B cell (primary cell): ENCODE measurements at regions of chr2 and their contacts with region 1.

Region 1: GRCh38 chr2:65390134-65390533 is 42.3 kb downstream of the SPRED2 start:
- DNase-seq: peak; percentile 81
- ATAC-seq: peak; percentile 80
- H3K4me3 ChIP-seq: peak overlapping the region in 3 of 5 experiments; percentile 29 to 42 (median 32)
- H3K4me3 Mint-ChIP-seq: peak overlapping the region; percentile 84
- H3K27ac ChIP-seq: peak overlapping the region in 1 of 2 donors; percentile 29
- H3K27ac Mint-ChIP-seq: peak overlapping the region; percentile 39
- H3K4me1 ChIP-seq: peaks cover 50 to 51% of the 10 kb centered on the region in 2 donors
- H3K4me1 Mint-ChIP-seq: peaks cover 58% of the 10 kb centered on the region
- H3K27me3 ChIP-seq: no peaks in the 10 kb centered on the region
- H3K27me3 Mint-ChIP-seq: peaks cover 11% of the 10 kb centered on the region
- CTCF ChIP-seq: no peak

Region 2: GRCh38 chr2:65278531-65278981 is 111.6 kb before region 1 on chr2:
- CTCF ChIA-PET with region 1: no interaction called
- POLR2A ChIA-PET with region 1: no interaction called
- intact Hi-C with region 1: loop called (anchors 10 kb)
- DNase-seq: no peak
- ATAC-seq: no peak
- H3K4me3 ChIP-seq: no peak overlapping the region
- H3K4me3 Mint-ChIP-seq: no peak overlapping the region
- H3K27ac ChIP-seq: no peak overlapping the region
- H3K27ac Mint-ChIP-seq: no peak overlapping the region
- H3K4me1 ChIP-seq: peaks cover 6 to 10% of the 10 kb centered on the region in 2 donors
- H3K4me1 Mint-ChIP-seq: peaks cover 9% of the 10 kb centered on the region
- H3K27me3 ChIP-seq: no peaks in the 10 kb centered on the region
- H3K27me3 Mint-ChIP-seq: peaks cover 5% of the 10 kb centered on the region
- CTCF ChIP-seq: no peak

Region 3: DNA sequence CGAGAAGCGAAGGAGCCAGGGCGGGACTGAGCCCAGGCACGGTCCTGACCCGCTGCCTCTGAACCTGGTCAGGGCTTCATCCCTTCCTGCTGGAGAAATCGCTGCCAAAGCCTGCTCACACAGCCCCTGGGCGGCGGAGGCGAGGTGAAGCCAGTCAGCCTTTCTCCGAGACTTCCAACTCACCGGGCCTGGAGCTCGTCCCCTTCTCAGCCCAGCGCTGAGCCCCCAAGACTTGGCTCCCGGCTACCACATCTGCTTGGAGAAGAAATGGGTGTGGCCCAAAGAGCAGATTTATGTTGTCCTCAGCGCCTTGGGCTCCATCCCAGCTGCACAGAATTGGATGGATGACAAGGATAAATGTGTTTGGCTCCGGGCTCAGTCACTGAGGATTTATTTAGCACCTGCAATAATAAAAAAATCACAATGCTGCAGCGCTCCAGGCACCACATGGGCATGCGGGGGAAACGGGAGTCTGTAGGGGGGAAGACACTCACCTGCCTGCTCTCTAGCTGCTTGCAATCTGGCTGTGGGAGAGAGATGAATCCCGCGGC is 97.6 kb before region 1 on chr2:
- CTCF ChIA-PET with region 1: no interaction called
- POLR2A ChIA-PET with region 1: no interaction called
- intact Hi-C with region 1: no loop called
- DNase-seq: no peak
- ATAC-seq: no peak
- H3K4me3 ChIP-seq: no peak overlapping the region
- H3K4me3 Mint-ChIP-seq: no peak overlapping the region
- H3K27ac ChIP-seq: no peak overlapping the region
- H3K27ac Mint-ChIP-seq: no peak overlapping the region
- H3K4me1 ChIP-seq: no peaks in the 10 kb centered on the region
- H3K4me1 Mint-ChIP-seq: no peaks in the 10 kb centered on the region
- H3K27me3 ChIP-seq: no peaks in the 10 kb centered on the region
- H3K27me3 Mint-ChIP-seq: peaks cover 18% of the 10 kb centered on the region
- CTCF ChIP-seq: no peak

Region 4: DNA sequence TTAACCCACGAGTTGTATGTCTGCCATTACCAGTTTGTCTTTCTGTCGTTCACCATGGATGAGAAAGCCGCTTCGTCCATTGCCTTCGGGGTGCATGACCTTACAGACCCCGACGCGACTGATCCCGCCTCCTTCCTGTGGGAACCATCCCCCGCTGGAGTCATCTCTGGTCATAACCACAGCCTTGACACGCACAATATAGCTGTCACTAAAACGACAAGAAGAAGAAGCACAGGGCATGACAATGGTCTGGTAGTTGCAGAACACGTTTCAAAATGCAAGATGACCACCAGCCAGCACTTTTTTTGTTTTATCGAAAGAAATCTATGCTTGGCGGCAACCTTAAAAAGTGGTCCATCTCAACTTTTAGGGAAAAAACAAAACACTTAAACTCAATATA is 45.4 kb before region 1 on chr2:
- CTCF ChIA-PET with region 1: no interaction called
- POLR2A ChIA-PET with region 1: no interaction called
- intact Hi-C with region 1: loop called (anchors 1 kb)
- DNase-seq: no peak
- ATAC-seq: no peak
- H3K4me3 ChIP-seq: no peak overlapping the region
- H3K4me3 Mint-ChIP-seq: no peak overlapping the region
- H3K27ac ChIP-seq: no peak overlapping the region
- H3K27ac Mint-ChIP-seq: no peak overlapping the region
- H3K4me1 ChIP-seq: no peaks in the 10 kb centered on the region
- H3K4me1 Mint-ChIP-seq: no peaks in the 10 kb centered on the region
- H3K27me3 ChIP-seq: peaks cover 0 to 5% (median 0%) of the 10 kb centered on the region in 4 experiments
- H3K27me3 Mint-ChIP-seq: peaks cover 22% of the 10 kb centered on the region
- CTCF ChIP-seq: no peak

Region 5: GRCh38 chr2:65371074-65371434 is 19.1 kb before region 1 on chr2:
- CTCF ChIA-PET with region 1: no interaction called
- POLR2A ChIA-PET with region 1: no interaction called
- intact Hi-C with region 1: no loop called
- DNase-seq: no peak
- ATAC-seq: no peak
- H3K4me3 ChIP-seq: no peak overlapping the region
- H3K4me3 Mint-ChIP-seq: no peak overlapping the region
- H3K27ac ChIP-seq: no peak overlapping the region
- H3K27ac Mint-ChIP-seq: no peak overlapping the region
- H3K4me1 ChIP-seq: peaks cover 14 to 15% of the 10 kb centered on the region in 2 donors
- H3K4me1 Mint-ChIP-seq: peaks cover 14% of the 10 kb centered on the region
- H3K27me3 ChIP-seq: peaks cover 0 to 9% (median 0%) of the 10 kb centered on the region in 4 experiments
- H3K27me3 Mint-ChIP-seq: peaks cover 12% of the 10 kb centered on the region
- CTCF ChIP-seq: no peak